ENCODE measurements at regions of chr13 and their contacts with region 1.

Region 1: DNA sequence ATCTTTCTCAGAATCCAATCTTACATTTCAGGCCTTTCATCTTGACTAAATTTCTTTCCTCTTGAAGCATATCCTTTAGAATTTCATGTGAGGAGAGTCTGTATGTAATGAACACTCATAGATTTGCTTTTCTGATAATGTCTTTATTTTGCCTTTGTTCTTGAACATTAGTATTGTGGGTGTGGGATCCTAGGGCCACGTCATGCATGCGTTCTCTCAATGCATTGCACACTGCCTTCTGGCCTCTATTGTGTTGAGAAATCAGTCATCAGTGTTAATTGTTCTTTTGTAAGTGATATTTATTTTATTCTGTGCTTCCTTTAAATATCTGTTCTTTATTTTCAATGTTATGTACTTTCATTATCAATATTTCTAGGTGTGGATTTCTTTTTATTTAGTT is 364.9 kb downstream of the OXGR1 start:
- DNase-seq: no peak
- H3K4me3 ChIP-seq: no peak overlapping the region
- H3K27ac ChIP-seq: no peak overlapping the region
- H3K4me1 ChIP-seq: no peaks in the 10 kb centered on the region
- H3K27me3 ChIP-seq: no peaks in the 10 kb centered on the region
- CTCF ChIP-seq: no peak
- POLR2A ChIP-seq: no peak

Region 2: DNA sequence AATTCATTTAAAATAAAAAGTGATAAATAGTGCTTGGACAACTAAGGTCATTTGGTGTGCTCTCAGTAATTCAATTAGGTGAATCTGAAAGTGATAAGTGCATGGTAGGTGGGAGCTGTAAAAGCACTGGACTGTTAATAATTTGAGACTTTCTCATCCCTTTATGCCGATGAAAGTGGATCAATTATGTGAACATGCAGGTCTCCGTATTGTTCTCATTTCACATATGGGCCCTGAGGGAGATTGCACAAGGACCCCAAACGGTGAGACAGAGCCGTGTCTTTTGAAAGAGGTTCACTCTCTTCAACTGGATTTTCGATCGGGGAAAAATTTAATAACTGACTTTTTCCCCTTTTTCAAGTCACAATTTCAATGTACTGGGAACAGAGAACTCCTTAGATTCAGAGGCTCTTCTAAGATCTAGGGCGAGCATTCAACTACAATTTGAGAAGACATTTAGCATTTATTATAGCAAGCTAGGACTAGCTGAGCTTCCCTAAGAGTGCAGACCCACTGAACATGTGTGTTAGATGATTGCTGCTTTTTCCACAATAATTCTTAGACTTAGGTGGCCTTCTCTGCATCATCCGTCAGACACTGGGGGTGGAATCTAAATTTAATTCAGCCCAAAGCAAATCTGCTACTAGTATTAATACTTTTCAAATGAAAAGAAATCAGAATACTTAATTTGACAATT is 17.3 kb after region 1 on chr13:
- intact Hi-C with region 1: loop called (anchors 1 kb)
- DNase-seq: no peak
- H3K4me3 ChIP-seq: no peak overlapping the region
- H3K27ac ChIP-seq: no peak overlapping the region
- H3K4me1 ChIP-seq: no peaks in the 10 kb centered on the region
- H3K27me3 ChIP-seq: no peaks in the 10 kb centered on the region
- CTCF ChIP-seq: no peak
- POLR2A ChIP-seq: no peak

Region 3: DNA sequence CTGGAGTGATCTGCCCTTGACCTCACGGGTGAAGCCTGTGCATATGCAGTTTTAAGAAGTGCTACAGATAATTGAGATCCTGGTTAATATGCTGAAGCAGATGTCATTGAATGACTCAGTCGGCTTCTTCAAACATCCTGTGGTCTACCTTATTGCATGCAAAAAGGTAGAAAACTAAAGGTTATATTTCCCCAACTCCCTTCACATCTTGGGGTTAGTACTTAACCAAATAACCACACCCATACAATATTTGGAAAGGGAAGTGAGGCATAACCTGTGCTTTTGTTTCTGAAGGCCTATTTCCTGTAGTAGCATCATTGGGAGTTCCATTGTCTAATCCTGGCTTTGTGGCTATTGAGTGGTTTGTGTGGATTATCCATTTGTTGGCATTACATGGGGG is 862.9 kb after region 1 on chr13:
- intact Hi-C with region 1: no loop called
- DNase-seq: no peak
- H3K4me3 ChIP-seq: no peak overlapping the region
- H3K27ac ChIP-seq: no peak overlapping the region
- H3K4me1 ChIP-seq: no peaks in the 10 kb centered on the region
- H3K27me3 ChIP-seq: no peaks in the 10 kb centered on the region
- CTCF ChIP-seq: no peak
- POLR2A ChIP-seq: no peak

Measured in breast epithelium (tissue), 4 donors.